Stomach (tissue), 19 donors: ENCODE measurements at regions of chr17 and their contacts with region 1.

Region 1: GRCh38 chr17:64025732-64026294 is 5.4 kb upstream of the ICAM2 start:
- DNase-seq: peak; percentile 80 to 95
- H3K4me3 ChIP-seq: peak overlapping the region; percentile 3 to 22 (median 13)
- H3K27ac ChIP-seq: peak overlapping the region; percentile 25 to 77 (median 63)
- H3K4me1 ChIP-seq: peaks cover 10 to 24% (median 17%) of the 10 kb centered on the region in 4 donors
- H3K27me3 ChIP-seq: no peaks in the 10 kb centered on the region
- CTCF ChIP-seq: peak in 5 of 7 experiments; percentile 81 to 98 (median 90)
- EP300 ChIP-seq: no peak
- POLR2A ChIP-seq: no peak

Region 2: DNA sequence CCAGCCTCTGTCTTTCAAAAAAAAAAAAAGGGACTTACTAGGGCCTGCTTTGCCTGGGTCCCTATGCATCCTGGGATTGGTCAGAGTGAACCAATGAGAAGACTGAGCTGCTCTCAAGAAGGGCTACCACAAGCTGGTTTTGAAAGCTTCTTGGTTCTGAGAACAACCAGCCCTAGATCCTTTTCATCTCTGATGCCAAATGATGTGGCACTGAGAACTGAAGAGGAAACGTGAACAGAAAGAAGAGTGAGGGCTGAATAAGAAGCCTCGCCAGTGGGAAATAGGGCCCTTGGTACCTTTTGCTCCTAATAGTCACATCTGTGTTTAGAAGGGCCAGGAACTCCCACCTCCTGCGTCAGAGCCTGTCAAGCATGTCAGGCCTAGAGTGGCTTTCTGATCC is 414.5 kb before region 1 on chr17:
- intact Hi-C with region 1: no loop called
- DNase-seq: no peak
- H3K4me3 ChIP-seq: no peak overlapping the region
- H3K27ac ChIP-seq: no peak overlapping the region
- H3K4me1 ChIP-seq: peaks cover 0 to 6% (median 0%) of the 10 kb centered on the region in 4 donors
- H3K27me3 ChIP-seq: no peaks in the 10 kb centered on the region
- CTCF ChIP-seq: no peak
- EP300 ChIP-seq: no peak
- POLR2A ChIP-seq: no peak

Region 3: DNA sequence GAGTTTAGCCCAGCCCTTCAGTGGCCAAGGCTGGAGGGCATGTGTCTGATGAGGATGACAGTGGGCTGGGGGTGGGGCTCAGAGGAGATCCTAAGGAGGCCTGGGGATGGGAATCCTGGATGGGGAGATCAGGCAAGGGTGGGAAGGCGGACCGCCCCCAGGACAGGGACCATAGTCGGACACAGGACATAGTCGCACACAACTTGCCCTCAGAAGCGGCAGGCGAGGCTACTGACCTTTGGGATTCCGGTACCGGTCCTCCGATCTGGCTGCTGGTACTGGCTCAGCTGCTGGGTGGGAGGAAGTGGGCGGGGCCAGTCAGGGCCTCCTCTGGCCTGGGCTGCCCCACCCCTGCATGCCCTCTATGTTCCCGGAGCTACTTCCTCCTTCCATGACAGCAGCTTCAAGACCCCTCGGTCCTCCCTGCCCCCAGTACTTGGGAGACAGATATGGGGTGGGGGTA is 94.7 kb before region 1 on chr17:
- intact Hi-C with region 1: loop called (anchors 10 kb)
- DNase-seq: peak; percentile 56 to 77
- H3K4me3 ChIP-seq: peak overlapping the region in 1 of 4 donors; percentile 46
- H3K27ac ChIP-seq: peak overlapping the region in 4 of 5 donors; percentile 13 to 60 (median 28)
- H3K4me1 ChIP-seq: peaks cover 0 to 21% (median 0%) of the 10 kb centered on the region in 4 donors
- H3K27me3 ChIP-seq: peaks cover 0 to 6% (median 0%) of the 10 kb centered on the region in 3 donors
- CTCF ChIP-seq: no peak
- EP300 ChIP-seq: no peak
- POLR2A ChIP-seq: no peak